Astrocyte of the cerebellum (primary cell): ENCODE measurements at regions of chr16 and their contacts with region 1.

Region 1: GRCh38 chr16:72299684-72300243 is 127.8 kb upstream of the PMFBP1 start:
- DNase-seq: no peak
- H3K4me3 ChIP-seq: no peak overlapping the region
- CTCF ChIP-seq: no peak

Region 2: GRCh38 chr16:72210555-72210954 is 89.2 kb before region 1 on chr16:
- in situ Hi-C with region 1: no loop called
- DNase-seq: no peak
- H3K4me3 ChIP-seq: no peak overlapping the region
- CTCF ChIP-seq: no peak

Region 3: GRCh38 chr16:72349719-72350118 is 50.0 kb after region 1 on chr16:
- in situ Hi-C with region 1: loop called (anchors 5 kb)
- DNase-seq: no peak
- H3K4me3 ChIP-seq: no peak overlapping the region
- CTCF ChIP-seq: no peak

Region 4: DNA sequence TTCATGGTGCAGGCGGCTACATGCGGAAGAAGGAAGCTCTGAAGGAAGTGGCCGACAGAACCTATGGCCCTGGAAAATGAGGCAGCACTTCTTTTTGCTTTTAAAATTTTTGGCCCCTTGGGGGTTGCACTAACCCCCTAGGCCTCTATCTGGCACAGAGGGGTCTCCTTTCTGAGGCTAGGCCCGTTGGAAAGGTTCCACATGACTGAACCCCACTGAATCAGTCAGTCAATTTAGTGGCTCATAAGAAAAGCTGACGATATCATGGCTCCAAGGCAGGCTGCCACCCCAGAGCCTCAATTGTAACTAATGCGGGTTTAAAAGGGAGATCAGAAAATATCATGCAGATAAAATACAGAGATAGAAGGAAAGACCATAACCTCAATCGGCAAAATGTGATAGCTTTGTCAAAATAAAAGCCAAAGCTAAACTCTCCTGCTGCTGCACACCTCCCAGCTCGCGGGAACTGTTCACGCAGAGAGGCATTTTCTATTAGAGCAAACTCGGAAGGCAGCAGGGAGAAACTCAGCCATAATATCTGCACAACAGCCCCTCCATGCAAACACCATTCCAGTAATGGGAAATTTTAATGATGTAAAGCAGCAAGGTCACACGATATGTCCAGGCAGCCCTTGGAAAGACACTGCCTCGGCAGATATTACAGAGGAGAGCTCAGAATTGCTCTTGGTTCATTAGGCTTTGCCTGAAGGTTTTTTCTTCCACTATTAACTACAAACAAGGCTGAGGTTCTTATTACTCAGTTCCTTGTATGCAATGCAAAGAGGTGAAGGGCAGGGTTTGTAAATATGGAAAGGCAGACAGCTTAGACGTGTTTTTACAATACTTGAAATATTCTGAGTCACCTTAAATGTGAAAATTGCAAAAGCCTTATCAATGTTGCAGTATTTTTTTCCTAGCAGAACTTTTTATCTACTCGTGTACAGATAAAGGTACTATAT is 72.6 kb after region 1 on chr16:
- in situ Hi-C with region 1: no loop called
- DNase-seq: no peak
- H3K4me3 ChIP-seq: no peak overlapping the region
- CTCF ChIP-seq: no peak